ENCODE measurements at regions of chr12 and their contacts with region 1.

Region 1: GRCh38 chr12:110937104-110937641 is 16.8 kb upstream of the MYL2 start:
- DNase-seq: peak; percentile 72
- H3K4me3 ChIP-seq: no peak overlapping the region
- H3K27ac ChIP-seq: no peak overlapping the region
- H3K4me1 ChIP-seq: no peaks in the 10 kb centered on the region
- H3K27me3 ChIP-seq: no peaks in the 10 kb centered on the region
- CTCF ChIP-seq: peak; percentile 97

Region 2: DNA sequence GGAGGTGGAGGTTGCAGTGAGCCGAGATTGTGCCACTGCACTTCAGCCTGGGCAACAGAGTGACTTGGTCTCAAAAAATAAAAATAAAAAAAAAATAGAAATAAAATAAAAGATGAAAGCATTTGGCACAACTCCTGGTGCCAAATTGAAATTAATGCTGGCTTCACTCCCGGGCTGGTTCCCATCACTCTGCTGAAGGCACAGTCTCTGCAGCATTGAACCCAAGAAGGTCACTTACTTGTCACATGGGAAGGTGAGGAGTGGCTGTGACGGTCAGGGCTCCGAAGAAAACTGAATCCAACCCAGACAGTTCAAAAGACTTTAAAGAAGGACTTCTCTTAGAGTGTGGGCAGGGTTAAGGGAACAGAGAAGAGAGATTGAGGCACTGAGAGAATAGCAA is 100.9 kb before region 1 on chr12:
- CTCF ChIA-PET with region 1: no interaction called
- POLR2A ChIA-PET with region 1: no interaction called
- intact Hi-C with region 1: no loop called
- DNase-seq: no peak
- H3K4me3 ChIP-seq: no peak overlapping the region
- H3K27ac ChIP-seq: no peak overlapping the region
- H3K4me1 ChIP-seq: no peaks in the 10 kb centered on the region
- H3K27me3 ChIP-seq: no peaks in the 10 kb centered on the region
- CTCF ChIP-seq: no peak

Region 3: DNA sequence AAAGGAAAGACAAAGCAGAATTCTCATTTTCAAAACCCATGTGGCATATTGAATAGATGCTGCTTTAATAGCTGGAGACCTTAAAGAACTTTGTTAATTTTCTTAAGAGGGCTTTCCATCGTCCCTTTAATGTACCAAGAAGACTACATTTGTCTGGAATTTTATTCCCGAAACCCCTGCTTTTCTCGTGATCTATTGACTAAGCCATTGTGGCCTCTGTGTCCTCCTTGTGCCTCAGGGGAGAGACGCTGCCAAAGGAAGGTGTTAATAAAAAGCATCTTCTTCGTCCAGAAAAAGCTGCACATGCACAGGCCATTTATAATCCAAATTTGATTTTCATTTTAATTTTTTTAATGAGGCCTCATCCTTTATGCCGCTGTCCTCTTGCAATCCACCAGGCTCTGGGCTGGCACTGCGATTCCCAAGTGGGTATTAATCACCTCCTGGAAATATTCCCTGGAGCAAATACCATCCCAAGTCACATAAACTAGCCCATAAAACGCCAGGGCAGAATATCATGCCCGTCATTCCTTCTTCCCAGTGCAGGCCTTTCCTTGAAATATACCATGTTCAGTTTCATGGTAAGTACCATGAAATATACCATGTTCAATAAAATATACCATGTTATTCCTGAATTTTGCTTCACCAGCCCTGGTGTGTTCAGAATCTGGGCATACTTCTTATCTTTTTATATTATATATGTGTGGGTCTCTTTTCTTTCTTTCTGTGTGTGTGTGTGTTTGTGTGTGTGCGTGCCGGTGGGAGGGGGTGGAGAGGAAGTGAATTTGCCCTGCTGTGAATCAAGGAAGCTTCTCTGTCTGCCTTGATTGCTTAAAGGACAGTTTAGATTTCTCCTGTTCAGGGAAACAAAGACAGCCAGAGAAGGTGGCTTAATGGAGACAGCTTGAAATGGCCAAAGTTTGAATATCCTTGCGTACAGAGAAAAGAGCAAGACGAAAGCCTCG is 284.2 kb after region 1 on chr12:
- CTCF ChIA-PET with region 1: interaction called, 11 read pairs
- POLR2A ChIA-PET with region 1: no interaction called
- intact Hi-C with region 1: no loop called
- DNase-seq: no peak
- H3K4me3 ChIP-seq: no peak overlapping the region
- H3K27ac ChIP-seq: no peak overlapping the region
- H3K4me1 ChIP-seq: no peaks in the 10 kb centered on the region
- H3K27me3 ChIP-seq: no peaks in the 10 kb centered on the region
- CTCF ChIP-seq: no peak